ENCODE measurements at regions of chr3 and their contacts with region 1.

Region 1: GRCh38 chr3:10883478-10884234 is 67.6 kb downstream of the SLC6A11 start:
- DNase-seq: peak; percentile 70
- ATAC-seq: peak; percentile 66
- H3K4me3 ChIP-seq: no peak overlapping the region
- H3K27ac ChIP-seq: no peak overlapping the region
- H3K4me1 ChIP-seq: peaks cover 19% of the 10 kb centered on the region
- H3K27me3 ChIP-seq: no peaks in the 10 kb centered on the region
- CTCF ChIP-seq: peak; percentile 91

Region 2: DNA sequence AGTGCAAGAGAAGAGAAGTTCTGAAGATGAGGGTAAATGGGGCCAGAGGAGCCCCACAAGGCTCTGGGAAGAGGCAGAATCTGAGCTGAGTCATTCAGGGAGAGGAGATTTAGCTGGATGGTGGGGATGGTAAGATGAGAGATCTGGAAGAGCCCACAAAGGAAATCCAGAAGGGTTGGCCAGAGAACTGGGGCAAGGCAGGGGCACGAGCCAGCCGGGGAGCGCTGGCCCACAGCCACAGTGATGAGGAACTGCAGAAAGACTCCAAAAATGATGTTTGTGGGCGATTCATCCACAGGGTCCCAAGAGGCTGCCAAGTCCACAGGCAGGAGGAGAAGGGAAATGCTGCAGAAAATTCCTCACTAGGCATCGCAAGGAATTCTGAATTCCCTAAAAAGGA is 302.4 kb before region 1 on chr3:
- CTCF ChIA-PET with region 1: no interaction called
- POLR2A ChIA-PET with region 1: no interaction called
- intact Hi-C with region 1: no loop called
- DNase-seq: no peak
- ATAC-seq: no peak
- H3K4me3 ChIP-seq: no peak overlapping the region
- H3K27ac ChIP-seq: no peak overlapping the region
- H3K4me1 ChIP-seq: no peaks in the 10 kb centered on the region
- H3K27me3 ChIP-seq: peaks cover 74% of the 10 kb centered on the region
- CTCF ChIP-seq: no peak

Region 3: GRCh38 chr3:10772271-10773161 is 111.1 kb before region 1 on chr3:
- CTCF ChIA-PET with region 1: interaction called, 4 read pairs
- POLR2A ChIA-PET with region 1: no interaction called
- intact Hi-C with region 1: loop called (anchors 1 kb)
- DNase-seq: peak; percentile 67
- ATAC-seq: peak; percentile 85
- H3K4me3 ChIP-seq: no peak overlapping the region
- H3K27ac ChIP-seq: no peak overlapping the region
- H3K4me1 ChIP-seq: peaks cover 11% of the 10 kb centered on the region
- H3K27me3 ChIP-seq: no peaks in the 10 kb centered on the region
- CTCF ChIP-seq: peak; percentile 99

Region 4: DNA sequence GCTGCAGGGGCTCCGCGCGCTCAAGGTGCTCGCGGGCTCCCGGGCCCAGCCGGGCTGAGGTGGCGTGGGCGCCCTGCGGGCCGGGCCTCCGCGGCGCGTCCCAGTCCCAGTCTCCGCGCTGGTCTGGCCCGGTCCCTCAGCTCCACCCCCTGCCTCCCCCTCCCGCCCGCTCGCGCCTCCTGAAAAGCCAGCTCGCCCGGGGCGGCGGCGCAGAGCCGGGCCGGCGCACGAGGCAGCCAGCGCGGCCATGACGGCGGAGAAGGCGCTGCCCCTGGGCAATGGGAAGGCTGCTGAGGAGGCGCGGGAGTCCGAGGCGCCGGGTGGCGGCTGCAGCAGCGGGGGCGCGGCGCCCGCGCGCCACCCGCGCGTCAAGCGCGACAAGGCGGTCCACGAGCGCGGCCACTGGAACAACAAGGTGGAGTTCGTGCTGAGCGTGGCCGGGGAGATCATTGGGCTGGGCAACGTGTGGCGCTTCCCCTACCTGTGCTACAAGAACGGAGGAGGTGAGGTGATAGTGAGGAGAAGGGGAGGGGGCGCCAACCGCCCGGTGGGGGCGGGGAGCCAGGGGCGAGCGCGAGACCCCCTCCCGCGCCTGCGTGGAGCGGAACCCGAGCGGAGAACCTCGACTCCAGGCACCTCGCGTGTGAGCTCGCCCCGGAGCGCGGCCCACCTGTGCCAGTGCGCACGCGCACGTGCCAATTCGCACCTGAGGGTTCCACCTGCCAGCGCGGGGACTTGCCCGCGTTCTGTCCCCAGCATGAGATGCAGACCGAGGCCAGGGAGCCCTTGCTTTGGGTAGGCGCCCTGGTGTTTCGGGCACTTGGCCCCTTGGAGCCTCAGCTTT is 67.4 kb before region 1 on chr3 and contains the start of gene SLC6A11:
- CTCF ChIA-PET with region 1: no interaction called
- POLR2A ChIA-PET with region 1: no interaction called
- intact Hi-C with region 1: loop called (anchors 10 kb)
- DNase-seq: peak; percentile 72
- ATAC-seq: peak; percentile 71
- H3K4me3 ChIP-seq: peak within 1 kb of the TSS; percentile 76
- H3K27ac ChIP-seq: peak within 1 kb of the TSS; percentile 66
- H3K4me1 ChIP-seq: peaks cover 34% of the 10 kb centered on the region
- H3K27me3 ChIP-seq: no peaks in the 10 kb centered on the region
- CTCF ChIP-seq: no peak
- total RNA-seq, gene SLC6A11: 34.0 and 37.1 TPM in 2 replicates

Region 5: GRCh38 chr3:11059090-11059798 is 175.6 kb after region 1 on chr3:
- CTCF ChIA-PET with region 1: no interaction called
- POLR2A ChIA-PET with region 1: no interaction called
- intact Hi-C with region 1: no loop called
- DNase-seq: peak; percentile 88
- ATAC-seq: peak; percentile 67
- H3K4me3 ChIP-seq: no peak overlapping the region
- H3K27ac ChIP-seq: no peak overlapping the region
- H3K4me1 ChIP-seq: no peaks in the 10 kb centered on the region
- H3K27me3 ChIP-seq: no peaks in the 10 kb centered on the region
- CTCF ChIP-seq: peak; percentile 94

Region 6: GRCh38 chr3:12325586-12326515 is 1442.2 kb after region 1 on chr3:
- CTCF ChIA-PET with region 1: no interaction called
- POLR2A ChIA-PET with region 1: no interaction called
- intact Hi-C with region 1: no loop called
- DNase-seq: no peak
- ATAC-seq: no peak
- H3K4me3 ChIP-seq: no peak overlapping the region
- H3K27ac ChIP-seq: no peak overlapping the region
- H3K4me1 ChIP-seq: no peaks in the 10 kb centered on the region
- H3K27me3 ChIP-seq: no peaks in the 10 kb centered on the region
- CTCF ChIP-seq: no peak